Left cardiac atrium (tissue), 4 donors: ENCODE measurements at regions of chr15 and their contacts with region 1.

Region 1: DNA sequence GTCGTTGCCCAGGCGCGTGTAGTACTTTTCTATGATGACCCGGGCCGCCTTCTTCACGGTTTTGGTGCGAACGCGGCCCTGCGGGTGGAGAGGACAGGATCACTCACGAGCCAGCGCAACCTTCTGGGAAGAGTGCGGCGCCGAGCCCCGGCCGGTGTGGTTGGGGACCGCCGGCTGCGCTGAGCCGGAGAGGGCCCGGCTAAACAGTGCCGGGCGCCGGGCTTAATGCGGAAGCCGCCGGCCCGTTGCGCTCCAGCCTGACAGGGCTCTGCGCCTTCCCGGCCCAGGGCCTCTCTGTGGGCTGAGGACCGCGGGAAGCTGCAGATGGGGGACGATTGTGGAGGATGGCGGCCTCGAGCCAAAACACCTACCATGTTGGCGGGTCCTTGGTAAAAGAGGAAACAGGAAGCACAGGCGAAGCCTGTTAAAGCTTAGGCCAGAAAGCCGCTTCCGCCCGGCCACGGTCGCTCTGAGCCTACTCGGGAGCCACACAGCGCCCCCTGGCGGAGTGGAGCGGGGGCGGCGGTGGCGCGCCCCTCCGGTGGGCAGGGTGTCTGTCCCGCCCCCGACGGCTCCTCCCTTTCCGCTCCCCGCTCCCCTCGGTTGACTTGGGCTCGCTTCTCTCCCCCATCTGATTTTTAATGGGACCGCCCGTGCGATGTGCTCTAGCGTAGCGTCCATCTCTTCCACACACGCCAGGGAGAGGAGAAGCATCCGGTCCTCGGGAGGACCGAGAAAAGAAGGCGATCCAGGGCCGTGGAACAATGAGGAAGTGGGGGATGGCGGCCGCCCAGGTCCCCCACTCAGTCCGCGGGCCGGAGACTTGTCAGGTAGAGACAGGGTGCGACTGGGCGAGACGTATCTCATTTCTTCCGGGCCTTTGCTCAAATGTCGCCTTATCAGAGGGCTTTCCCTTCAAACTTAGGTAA is at the start of gene RPS17:
- DNase-seq: peak; percentile 97
- ATAC-seq: peak; percentile 98
- total RNA-seq, gene RPS17: 888 to 970 TPM

Region 2: DNA sequence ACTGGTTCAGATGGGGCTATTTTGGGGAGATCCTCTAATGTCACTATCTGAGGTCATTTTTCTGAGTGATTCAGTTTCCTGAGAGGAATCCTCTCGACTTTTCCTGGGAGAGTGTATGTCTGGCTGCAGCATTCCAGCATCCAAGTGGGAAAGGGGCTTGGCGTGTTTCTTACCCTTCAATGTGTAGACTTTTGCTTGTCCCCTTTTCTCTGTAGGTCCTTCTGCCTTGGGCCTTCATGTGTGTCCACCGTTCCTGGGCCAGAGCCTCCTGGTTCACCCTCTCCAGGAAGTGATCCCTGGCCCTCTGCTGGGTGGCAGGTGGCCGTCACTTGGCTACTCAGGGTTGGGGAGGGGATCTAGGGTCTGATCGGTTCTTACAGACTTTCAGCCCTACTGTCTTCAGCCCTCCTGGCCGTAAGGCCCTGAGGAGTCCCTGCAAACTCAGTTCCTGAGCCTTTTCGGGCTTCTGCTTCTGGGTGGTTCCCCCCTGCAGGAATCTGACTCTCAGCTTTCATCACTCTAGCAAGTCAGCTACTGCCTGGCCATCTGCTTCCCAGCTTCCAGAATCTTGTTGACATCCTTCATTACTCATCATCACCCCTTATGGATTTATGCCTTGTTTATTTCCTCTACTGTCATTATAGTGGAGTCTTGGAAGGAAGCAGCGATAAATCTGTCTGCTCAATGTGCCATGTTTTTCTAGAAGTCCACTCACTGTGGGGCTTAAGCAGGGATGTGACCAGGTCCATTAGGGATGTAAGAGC is 227.6 kb before region 1 on chr15:
- intact Hi-C with region 1: no loop called
- DNase-seq: no peak
- ATAC-seq: no peak

Region 3: GRCh38 chr15:82749951-82750830 is 209.9 kb after region 1 on chr15:
- intact Hi-C with region 1: loop called in 1 of 2 experiments (anchors 2 kb)
- DNase-seq: peak; percentile 94
- ATAC-seq: peak; percentile 99

Region 4: DNA sequence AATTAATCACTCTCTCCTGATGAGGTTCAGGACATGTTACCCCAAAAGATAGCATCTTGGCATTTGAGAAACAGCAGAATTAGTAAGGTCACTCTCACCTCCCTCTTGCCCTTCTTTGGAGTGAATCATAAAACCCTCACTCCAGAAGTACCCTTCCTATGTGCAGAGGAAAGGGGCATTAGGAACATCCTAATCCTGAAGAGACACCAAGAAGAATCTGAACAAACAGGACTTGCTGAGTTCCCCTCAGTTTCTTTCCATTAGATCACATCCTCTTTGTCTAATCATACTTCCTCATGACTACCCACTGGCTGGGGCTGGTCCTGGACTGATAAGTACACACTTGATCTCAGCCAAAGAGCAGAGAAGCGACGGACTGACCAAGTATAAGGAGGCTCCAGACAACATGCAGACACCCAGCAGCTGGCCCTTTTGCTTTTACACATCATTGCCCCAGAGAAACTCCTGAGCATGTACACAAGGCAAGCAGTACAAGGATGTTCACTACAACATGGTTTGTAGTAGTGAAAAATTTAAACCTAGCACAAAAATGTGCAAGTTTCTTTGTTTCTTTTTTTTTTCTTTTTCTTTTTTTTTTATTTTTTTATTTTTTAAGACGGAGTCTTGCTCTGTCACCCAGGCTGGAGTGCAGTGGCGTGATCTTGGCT is 552.1 kb after region 1 on chr15:
- intact Hi-C with region 1: no loop called
- DNase-seq: peak; percentile 70
- ATAC-seq: peak; percentile 84 to 95